GM10248 (cell line): ENCODE measurements at regions of chr20 and their contacts with region 1.

Region 1: DNA sequence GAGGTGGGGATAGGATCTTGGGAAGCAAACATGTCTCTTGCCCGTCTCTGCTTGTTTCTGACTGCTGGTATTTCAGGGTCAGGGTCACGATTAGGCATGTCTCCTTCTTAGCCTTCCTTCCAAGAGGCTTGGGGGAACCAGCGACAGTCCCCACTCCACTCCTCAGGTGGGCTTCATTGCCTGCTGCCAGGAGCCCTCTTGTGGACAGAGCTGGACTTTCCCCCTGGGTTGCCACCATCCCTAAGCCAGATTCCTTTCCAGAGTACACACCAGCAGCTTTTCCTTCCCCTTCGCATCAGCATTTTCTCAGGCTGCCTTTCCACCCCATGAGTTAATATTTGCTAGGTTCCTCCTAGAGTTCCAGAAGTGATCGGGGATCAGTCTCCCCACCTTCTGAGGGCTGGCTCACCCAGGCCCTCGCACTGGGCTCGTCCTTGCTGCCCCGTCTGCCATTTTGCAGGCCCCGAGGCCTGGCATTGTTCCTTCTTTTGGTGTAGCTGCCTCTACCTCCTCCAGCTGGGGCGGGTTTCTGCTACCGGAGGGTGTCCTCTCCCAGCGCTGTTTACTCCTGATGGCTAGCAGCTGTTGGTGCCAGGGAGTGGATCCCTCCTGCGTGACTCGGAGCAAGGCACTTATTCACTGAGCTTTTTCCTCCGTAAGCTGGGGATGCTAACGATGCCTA is 8.8 kb upstream of the C20orf144 start:
- DNase-seq: peak; percentile 79
- CTCF ChIP-seq: peak; percentile 73

Region 2: DNA sequence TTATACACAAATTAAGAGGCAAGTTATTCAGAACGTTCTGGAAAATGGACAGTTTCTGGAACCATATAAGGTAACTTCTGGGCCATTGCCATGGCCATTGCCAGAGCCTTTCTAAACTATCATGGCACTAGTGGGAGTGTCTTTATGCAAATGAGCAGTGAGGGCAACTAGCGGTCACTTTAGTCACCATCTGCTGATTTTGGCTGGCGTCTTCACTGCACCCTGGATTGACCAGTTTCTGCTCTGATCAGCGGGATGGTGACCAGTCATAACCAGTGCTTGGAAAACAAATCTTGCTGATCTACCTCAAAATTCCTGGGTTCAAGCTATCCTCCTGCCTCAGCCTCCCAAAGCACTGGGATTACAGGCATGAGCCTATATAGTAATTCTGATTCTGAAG is 202.5 kb before region 1 on chr20:
- CTCF ChIA-PET with region 1: interaction called, 13 read pairs
- POLR2A ChIA-PET with region 1: no interaction called
- DNase-seq: no peak
- CTCF ChIP-seq: no peak

Region 3: DNA sequence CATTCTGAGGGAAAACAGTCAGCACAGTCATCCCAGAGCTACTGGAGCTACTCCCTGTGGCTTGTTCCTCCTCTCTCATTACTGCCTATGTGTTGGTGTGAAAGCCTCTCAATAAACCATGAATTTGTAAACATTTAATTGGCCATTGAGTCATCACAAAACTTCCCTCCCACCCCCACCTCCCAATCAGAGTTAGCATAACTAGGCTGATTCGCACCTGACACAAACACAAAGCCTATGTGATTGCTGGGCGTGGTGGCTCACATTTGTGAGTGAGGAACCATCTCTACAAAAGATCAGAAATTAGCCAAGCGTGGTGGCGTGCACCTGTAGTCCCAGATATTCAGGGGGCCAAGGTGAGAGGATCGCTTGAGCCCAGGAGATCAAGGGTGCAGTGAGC is 192.6 kb before region 1 on chr20:
- CTCF ChIA-PET with region 1: interaction called, 13 read pairs
- POLR2A ChIA-PET with region 1: no interaction called
- DNase-seq: no peak
- CTCF ChIP-seq: no peak

Region 4: DNA sequence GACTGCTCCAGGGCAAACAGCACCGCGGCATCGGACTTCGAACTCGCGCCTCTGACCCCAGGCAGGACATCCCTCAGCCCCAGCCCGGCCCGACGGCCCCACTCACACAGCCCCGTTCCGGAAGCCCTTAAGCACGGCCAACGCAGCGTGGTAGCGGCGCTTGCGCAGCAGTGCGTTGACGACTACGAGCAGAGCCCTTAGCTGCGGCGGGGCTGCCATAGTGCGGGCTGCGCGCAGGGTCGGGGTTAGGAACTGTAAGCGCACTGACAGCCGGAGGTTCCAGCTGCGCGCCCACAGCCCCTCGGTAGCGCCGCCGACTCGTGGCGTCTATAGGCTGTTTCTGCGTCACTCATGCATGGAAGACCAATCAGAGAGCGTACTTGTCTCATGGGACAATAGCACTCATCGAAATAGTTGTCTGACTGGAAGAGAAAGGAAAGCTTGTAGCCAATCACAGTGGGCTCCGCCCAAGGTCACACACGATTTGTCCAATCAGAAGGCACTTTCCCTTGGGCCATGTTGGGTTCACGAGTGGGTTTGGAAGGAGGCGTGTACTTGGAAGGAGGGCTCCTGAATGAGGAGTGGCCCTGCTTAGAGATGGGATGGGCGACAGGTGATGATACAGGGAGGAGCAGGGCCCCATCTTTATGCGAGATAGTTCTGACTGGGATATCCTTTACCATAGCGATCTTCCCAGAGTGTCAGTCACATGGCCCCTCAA is 66.8 kb after region 1 on chr20 and contains the start of gene PXMP4:
- CTCF ChIA-PET with region 1: no interaction called
- POLR2A ChIA-PET with region 1: no interaction called
- DNase-seq: peak; percentile 98
- CTCF ChIP-seq: no peak